Activated CD4-positive, alpha-beta memory T cell treated with anti-CD3 and anti-CD28 coated beads for 36 hours (primary cell): ENCODE measurements at regions of chr15 and their contacts with region 1.

Region 1: GRCh38 chr15:31435261-31435911 is 108.8 kb downstream of the KLF13 start:
- DNase-seq: peak; percentile 92
- H3K4me3 Mint-ChIP-seq: peak overlapping the region; percentile 64
- H3K27ac Mint-ChIP-seq: peak overlapping the region; percentile 99
- H3K4me1 Mint-ChIP-seq: peaks cover 76% of the 10 kb centered on the region
- H3K27me3 Mint-ChIP-seq: no peaks in the 10 kb centered on the region

Region 2: GRCh38 chr15:30991255-30992072 is 443.9 kb before region 1 on chr15 and contains the start of gene MTMR10:
- CTCF ChIA-PET with region 1: no interaction called
- POLR2A ChIA-PET with region 1: no interaction called
- intact Hi-C with region 1: loop called (anchors 5 kb)
- DNase-seq: peak; percentile 76
- H3K4me3 Mint-ChIP-seq: peak within 1 kb of the TSS; percentile 87
- H3K27ac Mint-ChIP-seq: peak within 1 kb of the TSS; percentile 72
- H3K4me1 Mint-ChIP-seq: peaks cover 26% of the 10 kb centered on the region
- H3K27me3 Mint-ChIP-seq: no peaks in the 10 kb centered on the region
- total RNA-seq, gene MTMR10: 10.8 to 12.5 TPM

Region 3: GRCh38 chr15:31158858-31159569 is 276.4 kb before region 1 on chr15:
- CTCF ChIA-PET with region 1: no interaction called
- POLR2A ChIA-PET with region 1: no interaction called
- intact Hi-C with region 1: no loop called
- DNase-seq: no peak
- H3K4me3 Mint-ChIP-seq: no peak overlapping the region
- H3K27ac Mint-ChIP-seq: no peak overlapping the region
- H3K4me1 Mint-ChIP-seq: no peaks in the 10 kb centered on the region
- H3K27me3 Mint-ChIP-seq: peaks cover 1% of the 10 kb centered on the region

Region 4: DNA sequence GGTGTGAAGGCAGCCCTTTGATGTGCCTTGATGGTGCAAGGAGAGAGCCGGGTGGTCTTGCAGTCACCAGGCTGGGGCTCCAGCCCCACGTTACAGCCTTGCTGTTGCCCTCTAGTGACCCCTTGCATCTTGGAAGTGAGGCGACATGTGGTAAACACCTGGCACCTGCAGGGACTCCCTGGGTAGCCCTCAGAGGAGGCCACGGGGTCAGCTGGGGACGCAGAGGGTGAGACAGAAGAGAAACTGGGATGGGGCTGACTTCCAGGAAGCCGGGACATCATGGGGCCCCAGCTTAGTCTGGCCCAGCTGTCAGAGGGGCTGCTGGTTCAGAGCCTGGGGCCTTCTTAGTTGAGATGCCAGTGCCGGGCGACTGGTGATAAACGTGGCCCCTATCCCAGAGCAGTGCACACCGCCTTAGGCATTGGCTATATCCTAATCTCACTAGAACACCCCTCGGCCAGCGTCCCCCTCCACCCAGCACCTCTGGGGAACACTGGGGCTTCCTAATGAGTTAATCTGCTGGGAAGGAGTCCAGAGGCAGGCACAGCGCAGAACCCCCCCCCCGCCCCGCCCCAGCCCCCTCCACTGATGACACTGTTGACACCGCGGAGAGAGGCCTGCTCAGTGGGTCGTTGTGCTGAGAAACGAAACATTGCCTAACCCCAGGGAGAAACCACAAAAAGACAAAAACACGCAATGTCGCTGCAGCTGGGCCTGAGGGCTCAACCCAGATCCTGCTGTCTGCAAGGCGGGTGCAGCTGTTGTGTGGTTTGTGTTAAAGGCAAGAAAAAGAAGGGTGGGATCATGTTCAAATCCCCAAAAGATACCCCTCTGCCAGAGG is 169.3 kb before region 1 on chr15:
- CTCF ChIA-PET with region 1: interaction called, 11 read pairs
- POLR2A ChIA-PET with region 1: interaction called, 8 read pairs
- intact Hi-C with region 1: loop called (anchors 1 kb)
- DNase-seq: peak; percentile 82
- H3K4me3 Mint-ChIP-seq: peak overlapping the region; percentile 9
- H3K27ac Mint-ChIP-seq: peak overlapping the region; percentile 59
- H3K4me1 Mint-ChIP-seq: peaks cover 68% of the 10 kb centered on the region
- H3K27me3 Mint-ChIP-seq: no peaks in the 10 kb centered on the region

Region 5: GRCh38 chr15:31357148-31357752 is 78.1 kb before region 1 on chr15:
- CTCF ChIA-PET with region 1: interaction called, 16 read pairs
- POLR2A ChIA-PET with region 1: interaction called, 10 read pairs
- intact Hi-C with region 1: loop called (anchors 1 kb)
- DNase-seq: peak; percentile 60
- H3K4me3 Mint-ChIP-seq: peak overlapping the region; percentile 65
- H3K27ac Mint-ChIP-seq: peak overlapping the region; percentile 97
- H3K4me1 Mint-ChIP-seq: peaks cover 99% of the 10 kb centered on the region
- H3K27me3 Mint-ChIP-seq: no peaks in the 10 kb centered on the region

Region 6: DNA sequence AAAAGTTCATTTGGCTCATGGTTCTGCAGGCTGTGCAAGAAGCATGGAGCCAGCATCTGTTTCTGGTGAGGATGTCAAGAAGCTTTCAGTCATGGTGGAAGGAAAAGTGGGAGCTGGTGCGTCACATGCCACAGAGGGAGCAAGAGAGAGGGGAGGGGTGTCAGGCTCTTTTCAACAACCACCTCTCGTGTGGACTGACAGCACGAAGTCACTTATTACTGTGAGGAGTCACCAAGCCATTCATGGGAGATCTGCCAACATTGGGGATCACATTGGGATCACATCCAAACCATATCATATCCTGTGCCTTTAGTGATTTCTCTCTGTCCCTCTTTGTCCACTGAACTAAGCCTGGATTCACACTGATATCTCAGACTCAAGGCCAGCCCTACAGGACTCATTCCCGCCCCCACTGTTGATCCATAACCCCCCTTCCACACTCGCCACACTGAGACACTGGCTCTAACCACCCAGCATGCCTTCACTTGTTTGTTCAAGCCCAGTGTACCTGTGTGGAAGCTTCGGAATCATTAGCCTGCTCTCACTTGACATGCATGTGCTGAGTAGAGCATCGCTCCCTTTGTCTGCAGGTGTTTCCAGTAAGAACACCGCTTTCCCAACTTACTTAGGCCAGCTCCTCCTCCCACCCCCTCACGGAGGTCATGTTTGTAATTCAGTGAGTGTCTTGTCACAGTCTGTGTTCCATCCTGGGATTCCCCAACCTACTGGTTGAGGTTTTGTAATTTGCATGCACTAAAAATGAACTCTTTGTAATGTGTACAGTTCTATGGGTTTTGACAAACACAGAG is 23.4 kb after region 1 on chr15:
- CTCF ChIA-PET with region 1: interaction called, 34 read pairs
- POLR2A ChIA-PET with region 1: interaction called, 38 read pairs
- intact Hi-C with region 1: loop called (anchors 1 kb)
- DNase-seq: peak; percentile 84
- H3K4me3 Mint-ChIP-seq: peak overlapping the region; percentile 68
- H3K27ac Mint-ChIP-seq: peak overlapping the region; percentile 92
- H3K4me1 Mint-ChIP-seq: peaks cover 38% of the 10 kb centered on the region
- H3K27me3 Mint-ChIP-seq: no peaks in the 10 kb centered on the region

Region 7: DNA sequence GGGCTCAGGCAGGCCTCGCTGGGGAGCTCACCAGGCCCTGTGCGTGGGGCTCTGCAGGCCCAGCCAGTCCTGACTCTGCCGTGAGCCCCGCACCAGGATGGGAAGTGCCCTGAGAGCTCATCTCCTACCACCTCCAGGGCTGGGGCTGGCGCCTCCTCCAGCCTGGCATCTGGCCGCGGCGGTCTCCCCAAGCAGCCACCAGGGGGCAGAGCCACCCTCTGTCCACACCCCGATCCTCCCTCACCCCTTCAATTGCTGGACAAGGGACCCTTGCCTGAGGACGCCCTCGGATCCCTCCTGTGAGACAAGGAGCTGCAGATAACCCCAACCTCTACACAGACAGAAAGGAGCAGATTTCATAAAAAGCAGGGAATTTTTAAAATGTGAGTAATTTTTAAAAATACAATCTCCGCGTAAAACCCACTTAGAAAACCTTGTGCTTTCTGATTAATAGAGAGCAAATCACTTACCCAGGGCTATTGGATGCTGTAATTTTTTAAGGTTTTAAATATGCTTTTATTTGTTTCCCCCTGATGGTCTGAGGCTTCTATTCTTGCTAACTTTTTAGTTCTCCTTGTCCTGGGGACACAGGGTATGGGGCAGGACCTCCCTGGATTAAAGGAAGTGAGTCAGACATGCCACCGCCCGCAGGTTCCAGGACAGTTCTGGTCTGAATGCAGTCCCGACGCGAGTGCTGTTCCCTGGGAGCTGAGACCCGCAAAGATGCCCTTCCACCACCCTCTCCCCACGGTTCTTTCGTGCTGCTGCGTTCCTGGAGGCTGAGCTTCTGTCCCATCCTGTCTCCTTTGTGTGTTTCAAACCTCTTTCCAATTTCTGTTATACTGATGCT is 542.7 kb after region 1 on chr15:
- CTCF ChIA-PET with region 1: no interaction called
- POLR2A ChIA-PET with region 1: no interaction called
- intact Hi-C with region 1: loop called (anchors 5 kb)
- DNase-seq: peak; percentile 66
- H3K4me3 Mint-ChIP-seq: no peak overlapping the region
- H3K27ac Mint-ChIP-seq: no peak overlapping the region
- H3K4me1 Mint-ChIP-seq: peaks cover 8% of the 10 kb centered on the region
- H3K27me3 Mint-ChIP-seq: peaks cover 19% of the 10 kb centered on the region